ENCODE measurements at regions of chr17 and their contacts with region 1.

Region 1: GRCh38 chr17:76014184-76014924 is 12.8 kb downstream of the EVPL start:
- DNase-seq: peak; percentile 71
- H3K4me3 ChIP-seq: no peak overlapping the region
- H3K27ac ChIP-seq: no peak overlapping the region
- H3K4me1 ChIP-seq: no peaks in the 10 kb centered on the region
- H3K27me3 ChIP-seq: no peaks in the 10 kb centered on the region
- CTCF ChIP-seq: peak; percentile 98

Region 2: DNA sequence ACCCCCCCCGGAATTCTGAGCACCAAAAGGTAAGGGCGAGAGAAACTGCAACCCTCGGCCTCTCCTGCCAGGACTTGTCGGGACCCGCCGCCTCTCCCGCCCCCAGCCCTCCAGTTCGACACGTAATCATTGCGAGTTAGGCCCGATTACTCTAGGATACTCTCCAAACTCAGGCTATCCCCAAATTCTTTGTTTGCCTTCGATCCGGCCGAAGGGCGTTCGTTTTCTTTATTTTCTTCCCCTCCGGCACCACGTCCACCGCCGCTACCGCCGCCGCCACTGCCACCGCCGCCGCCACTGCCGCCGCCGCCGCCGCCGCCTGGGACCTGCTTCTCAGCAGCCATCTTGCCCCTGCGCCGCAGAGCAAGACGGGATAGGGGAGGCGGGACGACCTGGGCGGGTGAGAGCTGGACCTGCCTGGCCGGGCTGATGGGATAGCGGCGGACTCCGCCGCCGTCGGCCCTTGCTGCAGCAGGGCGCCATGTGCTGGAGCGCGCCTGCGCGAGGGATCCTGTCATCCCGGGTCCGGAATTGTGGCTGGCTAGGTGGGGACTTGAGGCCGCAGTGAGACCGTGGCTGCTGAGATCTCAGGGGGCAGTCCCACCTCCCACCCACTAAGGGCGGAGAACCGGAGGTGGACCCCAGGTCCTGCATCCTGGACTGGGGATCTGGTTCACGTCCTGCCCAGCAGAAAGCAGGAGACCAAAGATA is 57.9 kb after region 1 on chr17 and contains the start of gene SRP68:
- intact Hi-C with region 1: loop called (anchors 10 kb)
- DNase-seq: peak; percentile 95
- H3K4me3 ChIP-seq: peak within 1 kb of the TSS; percentile 74
- H3K27ac ChIP-seq: peak within 1 kb of the TSS; percentile 29
- H3K4me1 ChIP-seq: peaks cover 27% of the 10 kb centered on the region
- H3K27me3 ChIP-seq: peaks cover 40% of the 10 kb centered on the region
- CTCF ChIP-seq: no peak
- total RNA-seq, gene SRP68: 65.1 to 78.0 TPM

Region 3: GRCh38 chr17:76141212-76142038 is 127.1 kb after region 1 on chr17 and contains the start of gene FOXJ1:
- intact Hi-C with region 1: no loop called
- DNase-seq: peak; percentile 92
- H3K4me3 ChIP-seq: peak within 1 kb of the TSS; percentile 49
- H3K27ac ChIP-seq: no peak within 1 kb of the TSS
- H3K4me1 ChIP-seq: peaks cover 15% of the 10 kb centered on the region
- H3K27me3 ChIP-seq: peaks cover 27% of the 10 kb centered on the region
- CTCF ChIP-seq: no peak
- total RNA-seq, gene FOXJ1: 1.4 to 2.5 TPM

Region 4: GRCh38 chr17:76296186-76296585 is 281.8 kb after region 1 on chr17:
- intact Hi-C with region 1: loop called (anchors 10 kb)
- DNase-seq: no peak
- H3K4me3 ChIP-seq: no peak overlapping the region
- H3K27ac ChIP-seq: no peak overlapping the region
- H3K4me1 ChIP-seq: peaks cover 6% of the 10 kb centered on the region
- H3K27me3 ChIP-seq: no peaks in the 10 kb centered on the region
- CTCF ChIP-seq: no peak